Activated naive CD4-positive, alpha-beta T cell treated with anti-CD3 and anti-CD28 coated beads for 36 hours (primary cell): ENCODE measurements at regions of chr6 and their contacts with region 1.

Region 1: DNA sequence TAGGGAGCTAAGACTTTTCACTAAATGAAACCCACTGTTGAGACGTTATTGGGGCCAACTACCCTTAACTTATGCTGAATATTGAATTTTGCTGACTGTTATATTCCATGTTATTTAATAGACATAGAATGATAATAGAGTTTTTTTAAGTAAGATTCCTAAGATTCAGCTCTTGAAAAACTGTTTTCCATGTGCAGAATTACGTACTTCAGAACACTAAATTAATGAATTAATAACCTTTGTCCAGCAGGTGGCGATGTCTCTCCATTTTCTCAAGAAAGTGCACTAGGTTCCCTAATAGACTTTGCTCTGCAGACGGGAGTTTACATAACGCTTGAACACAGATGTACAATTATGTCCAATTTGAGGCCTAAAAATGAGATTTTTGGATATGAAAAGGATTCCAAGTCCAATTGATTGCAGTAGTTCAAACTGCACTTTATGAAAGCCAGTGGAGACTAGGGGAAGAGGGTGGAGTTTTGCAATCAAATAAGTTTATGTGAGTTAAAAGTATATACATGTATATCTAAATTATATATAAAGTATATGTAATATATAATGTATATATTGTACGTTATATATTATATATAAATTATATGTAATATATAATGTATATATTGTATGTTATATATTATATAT is 282.1 kb downstream of the UST start:
- DNase-seq: peak; percentile 87
- H3K4me3 Mint-ChIP-seq: no peak overlapping the region
- H3K27ac Mint-ChIP-seq: peak overlapping the region; percentile 57
- H3K4me1 Mint-ChIP-seq: peaks cover 46% of the 10 kb centered on the region
- H3K27me3 Mint-ChIP-seq: no peaks in the 10 kb centered on the region

Region 2: GRCh38 chr6:148559848-148560433 is 468.9 kb before region 1 on chr6:
- CTCF ChIA-PET with region 1: interaction called, 4 read pairs
- intact Hi-C with region 1: loop called (anchors 1 kb)
- DNase-seq: peak; percentile 64
- H3K4me3 Mint-ChIP-seq: no peak overlapping the region
- H3K27ac Mint-ChIP-seq: no peak overlapping the region
- H3K4me1 Mint-ChIP-seq: peaks cover 4% of the 10 kb centered on the region
- H3K27me3 Mint-ChIP-seq: peaks cover 18% of the 10 kb centered on the region

Region 3: DNA sequence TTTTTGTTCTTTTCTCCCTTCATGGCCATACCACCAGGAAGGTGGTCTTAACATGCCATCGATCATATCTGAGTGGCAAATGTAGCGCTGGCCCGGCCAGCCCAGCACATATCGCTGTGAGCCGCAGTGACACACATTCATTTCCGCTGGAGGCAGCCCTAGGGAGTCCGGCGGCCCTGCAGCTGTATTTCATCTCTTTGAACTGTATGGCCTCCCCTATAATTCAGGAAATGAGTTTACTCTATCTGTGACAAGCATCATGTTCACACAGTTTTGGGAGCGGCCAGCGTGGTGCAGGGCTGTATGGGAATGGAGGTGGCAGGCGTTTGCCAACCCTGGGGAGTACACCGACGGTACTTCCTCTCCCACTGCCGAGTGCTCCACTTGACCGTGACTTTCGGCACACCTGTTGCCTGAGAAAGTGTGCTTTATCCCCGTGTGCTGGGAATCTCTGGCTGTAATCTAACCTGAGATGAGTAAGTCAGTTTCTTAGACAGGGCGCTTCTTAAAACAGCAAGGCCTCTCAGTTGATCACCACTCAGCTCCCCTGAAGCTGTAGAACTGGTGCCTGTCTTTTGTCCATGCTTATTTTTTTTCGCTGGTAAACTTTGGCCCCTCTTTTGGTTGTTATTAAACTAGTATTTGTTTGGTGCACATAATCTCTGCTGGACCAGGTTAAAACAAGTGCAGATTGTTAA is 31.6 kb after region 1 on chr6:
- CTCF ChIA-PET with region 1: interaction called, 24 read pairs
- intact Hi-C with region 1: loop called (anchors 1 kb)
- DNase-seq: peak; percentile 76
- H3K4me3 Mint-ChIP-seq: peak overlapping the region; percentile 62
- H3K27ac Mint-ChIP-seq: peak overlapping the region; percentile 81
- H3K4me1 Mint-ChIP-seq: peaks cover 37% of the 10 kb centered on the region
- H3K27me3 Mint-ChIP-seq: no peaks in the 10 kb centered on the region

Region 4: DNA sequence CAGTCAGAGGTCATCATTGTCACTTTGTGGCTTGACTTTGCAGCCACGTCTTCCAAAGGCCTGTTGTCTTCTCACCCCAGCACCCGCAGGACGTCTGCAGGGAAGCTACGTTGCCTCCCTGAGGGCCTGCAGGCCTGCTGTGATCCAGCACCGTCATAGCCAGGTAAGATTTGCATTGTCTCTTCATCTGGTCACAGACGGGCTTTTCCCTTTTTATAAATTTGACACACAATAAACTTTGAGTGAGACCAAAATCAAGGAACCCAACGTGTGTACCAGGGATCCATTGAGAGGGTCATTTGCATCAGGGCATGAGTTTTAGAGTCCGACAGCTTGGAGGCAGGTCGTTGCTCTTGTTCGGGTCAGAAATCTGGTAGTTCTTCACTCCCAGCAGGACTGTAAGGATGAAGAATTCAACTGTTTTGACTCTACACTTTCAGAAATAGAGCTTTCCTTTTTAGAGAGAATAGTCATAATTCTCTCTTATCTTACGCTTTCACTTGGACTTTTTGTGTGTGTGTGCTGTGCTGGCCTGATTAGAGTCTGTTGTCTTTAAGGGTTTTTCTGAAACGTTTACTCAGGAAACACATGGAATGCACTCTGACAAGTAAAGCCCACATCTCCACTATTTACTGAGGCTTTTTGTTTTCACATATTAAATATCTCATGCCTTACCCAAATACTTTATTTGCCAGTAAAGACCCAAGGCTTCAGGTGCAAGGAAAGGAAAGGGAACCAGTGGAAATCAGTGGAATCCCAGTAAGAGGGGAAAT is 111.4 kb after region 1 on chr6:
- CTCF ChIA-PET with region 1: no interaction called
- intact Hi-C with region 1: loop called (anchors 1 kb)
- DNase-seq: peak; percentile 87
- H3K4me3 Mint-ChIP-seq: peak overlapping the region; percentile 66
- H3K27ac Mint-ChIP-seq: peak overlapping the region; percentile 94
- H3K4me1 Mint-ChIP-seq: peaks cover 42% of the 10 kb centered on the region
- H3K27me3 Mint-ChIP-seq: no peaks in the 10 kb centered on the region

Region 5: GRCh38 chr6:149316798-149317655 is 288.1 kb after region 1 on chr6:
- CTCF ChIA-PET with region 1: interaction called, 4 read pairs
- intact Hi-C with region 1: loop called (anchors 1 kb)
- DNase-seq: peak; percentile 91
- H3K4me3 Mint-ChIP-seq: peak overlapping the region; percentile 81
- H3K27ac Mint-ChIP-seq: peak overlapping the region; percentile 94
- H3K4me1 Mint-ChIP-seq: peaks cover 39% of the 10 kb centered on the region
- H3K27me3 Mint-ChIP-seq: no peaks in the 10 kb centered on the region

Region 6: GRCh38 chr6:149499066-149499465 is 470.2 kb after region 1 on chr6:
- CTCF ChIA-PET with region 1: no interaction called
- intact Hi-C with region 1: loop called (anchors 1 kb)
- DNase-seq: no peak
- H3K4me3 Mint-ChIP-seq: no peak overlapping the region
- H3K27ac Mint-ChIP-seq: peak overlapping the region; percentile 87
- H3K4me1 Mint-ChIP-seq: peaks cover 81% of the 10 kb centered on the region
- H3K27me3 Mint-ChIP-seq: no peaks in the 10 kb centered on the region

Region 7: GRCh38 chr6:149717588-149718458 is 688.9 kb after region 1 on chr6 and contains the start of gene LATS1:
- CTCF ChIA-PET with region 1: no interaction called
- intact Hi-C with region 1: loop called (anchors 10 kb)
- DNase-seq: peak; percentile 95
- H3K4me3 Mint-ChIP-seq: peak within 1 kb of the TSS; percentile 84
- H3K27ac Mint-ChIP-seq: peak within 1 kb of the TSS; percentile 94
- H3K4me1 Mint-ChIP-seq: peaks cover 25% of the 10 kb centered on the region
- H3K27me3 Mint-ChIP-seq: no peaks in the 10 kb centered on the region
- total RNA-seq, gene LATS1: 18.1 to 19.6 TPM